Mucosa of descending colon (tissue), 3 donors: ENCODE measurements at regions of chr2 and their contacts with region 1.

Region 1: DNA sequence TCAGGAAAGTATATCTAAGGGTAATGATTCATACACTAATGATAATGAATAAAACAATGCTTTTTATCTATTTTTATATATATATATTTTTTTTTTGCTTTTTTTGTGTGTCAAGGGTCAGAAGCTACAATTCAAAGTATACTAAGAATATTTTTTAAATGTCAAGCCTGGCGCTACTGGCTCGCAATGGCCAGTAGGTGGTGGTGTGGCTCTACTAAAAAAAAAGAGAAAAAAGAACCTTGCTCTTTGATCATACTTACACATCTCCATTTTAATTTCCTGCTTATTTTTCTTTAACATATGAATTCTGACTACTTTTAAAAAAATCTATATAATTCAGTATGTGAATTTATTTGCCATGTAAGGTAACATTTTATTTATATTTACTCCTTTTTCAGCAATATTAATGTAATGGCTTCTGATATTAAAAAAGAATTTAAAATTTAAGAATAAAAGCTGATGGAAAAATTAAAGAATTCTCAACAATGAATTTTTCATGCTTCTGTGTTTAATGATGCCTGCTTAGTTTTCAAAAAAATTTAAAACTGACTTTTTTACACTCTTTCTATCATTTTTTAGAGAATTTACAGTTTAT is 232.9 kb downstream of the GULP1 start:
- DNase-seq: peak in 1 of 3 donors; percentile 33
- ATAC-seq: peak; percentile 54
- H3K4me3 ChIP-seq: no peak overlapping the region
- H3K4me1 ChIP-seq: no peaks in the 10 kb centered on the region
- CTCF ChIP-seq: peak; percentile 62

Region 2: DNA sequence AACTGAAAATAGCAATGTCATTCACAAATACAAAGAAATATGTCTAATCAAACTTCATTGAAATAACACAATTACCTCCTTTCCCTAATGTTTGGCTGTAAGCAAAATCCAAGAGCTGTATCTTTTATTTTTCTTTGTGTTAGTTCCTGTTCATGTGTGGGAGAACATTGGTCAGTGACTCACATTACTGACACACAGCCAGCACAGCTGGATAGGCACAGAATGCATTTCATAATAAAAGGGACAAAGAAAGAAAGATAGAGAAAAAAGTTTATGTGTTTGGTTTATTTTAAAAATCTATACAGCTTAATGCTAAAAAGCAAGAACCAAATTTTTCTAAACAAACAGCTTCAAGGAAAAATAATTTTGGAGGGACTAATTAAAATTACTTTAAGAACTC is 264.0 kb after region 1 on chr2:
- intact Hi-C with region 1: loop called in 1 of 2 experiments (anchors 5 kb)
- DNase-seq: peak in 1 of 3 donors; percentile 53
- ATAC-seq: peak; percentile 35
- H3K4me3 ChIP-seq: no peak overlapping the region
- H3K4me1 ChIP-seq: no peaks in the 10 kb centered on the region
- CTCF ChIP-seq: no peak

Region 3: GRCh38 chr2:188978291-188979081 is 453.9 kb after region 1 on chr2:
- intact Hi-C with region 1: loop called (anchors 5 kb)
- DNase-seq: peak in 1 of 3 donors; percentile 29
- ATAC-seq: peak; percentile 67
- H3K4me3 ChIP-seq: no peak overlapping the region
- H3K4me1 ChIP-seq: no peaks in the 10 kb centered on the region
- CTCF ChIP-seq: no peak

Region 4: GRCh38 chr2:188983427-188984064 is 458.9 kb after region 1 on chr2:
- intact Hi-C with region 1: loop called (anchors 5 kb)
- DNase-seq: no peak
- ATAC-seq: no peak
- H3K4me3 ChIP-seq: no peak overlapping the region
- H3K4me1 ChIP-seq: no peaks in the 10 kb centered on the region
- CTCF ChIP-seq: no peak

Region 5: GRCh38 chr2:189412330-189412953 is 887.8 kb after region 1 on chr2:
- intact Hi-C with region 1: loop called in 1 of 2 experiments (anchors 10 kb)
- DNase-seq: peak in 1 of 3 donors; percentile 24
- ATAC-seq: peak; percentile 60
- H3K4me3 ChIP-seq: no peak overlapping the region
- H3K4me1 ChIP-seq: no peaks in the 10 kb centered on the region
- CTCF ChIP-seq: peak; percentile 43